Endothelial cell of umbilical vein (primary cell): ENCODE measurements at regions of chr4 and their contacts with region 1.

Region 1: DNA sequence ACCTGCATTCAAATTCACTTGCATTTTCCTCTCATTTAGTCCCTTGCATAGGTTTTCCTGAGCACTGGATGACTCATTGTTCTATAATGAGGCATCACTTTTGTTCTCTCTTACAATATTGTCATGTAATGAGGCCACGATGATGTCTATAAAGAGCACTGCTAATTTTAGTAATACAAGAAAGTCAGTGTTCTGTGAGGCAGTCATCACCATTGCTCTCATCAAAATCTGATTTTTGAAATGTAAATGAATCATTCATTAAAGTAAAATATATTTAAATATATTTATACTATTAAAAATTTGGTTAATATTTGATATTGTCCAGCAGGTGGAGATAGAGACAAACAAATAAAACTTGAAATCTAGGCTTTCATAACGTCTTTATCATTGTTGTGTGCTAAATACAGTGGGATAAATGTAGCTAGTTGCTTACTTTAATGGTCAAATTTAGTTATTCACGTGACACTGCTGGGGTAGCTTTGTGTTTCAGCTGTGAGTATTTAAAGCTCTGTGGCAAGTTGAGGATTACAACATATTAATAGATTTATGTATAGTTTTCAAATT is 15.4 kb downstream of the HMGB2 start:
- DNase-seq: peak; percentile 67
- H3K4me3 ChIP-seq: no peak overlapping the region
- H3K27ac ChIP-seq: peak overlapping the region; percentile 14
- H3K4me1 ChIP-seq: peaks cover 8% of the 10 kb centered on the region
- H3K27me3 ChIP-seq: no peaks in the 10 kb centered on the region
- CTCF ChIP-seq: peak in 1 of 2 donors; percentile 10
- POLR2A ChIP-seq: no peak

Region 2: DNA sequence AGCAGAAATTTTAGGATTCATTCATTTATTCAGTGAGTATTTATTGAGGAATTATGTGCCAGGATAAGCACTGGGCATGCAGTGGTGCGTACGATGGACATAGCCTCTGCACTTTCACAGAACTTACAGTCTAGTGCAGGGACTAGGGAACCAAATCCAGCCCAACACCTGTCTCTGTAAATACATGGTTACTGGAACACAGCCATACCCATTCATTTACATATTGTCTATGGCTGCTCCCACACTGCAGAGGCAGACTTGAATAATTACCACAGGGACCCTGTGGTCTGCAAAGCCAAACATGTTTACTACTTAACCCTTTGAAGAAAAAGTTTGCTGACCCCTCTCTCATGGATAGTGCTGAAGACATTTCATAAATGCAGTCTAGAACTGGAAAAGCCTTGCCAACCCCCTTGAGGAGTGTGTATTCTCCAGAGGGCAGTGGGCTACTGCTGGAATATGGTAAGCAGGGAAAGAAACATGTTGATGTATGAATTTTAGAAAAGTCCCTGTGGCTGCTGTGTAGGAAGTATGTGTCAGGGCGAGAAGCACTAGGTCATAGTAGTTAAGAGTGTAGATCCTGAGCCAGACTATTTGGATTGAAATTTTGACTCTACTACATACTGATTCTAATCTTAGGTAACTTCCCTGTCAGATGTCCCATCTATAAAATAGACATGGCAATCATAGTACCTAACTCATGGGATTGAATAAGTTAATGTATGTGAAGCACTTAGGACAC is 74.6 kb before region 1 on chr4:
- CTCF ChIA-PET with region 1: no interaction called
- POLR2A ChIA-PET with region 1: no interaction called
- dilution Hi-C with region 1: no loop called
- intact Hi-C with region 1: no loop called
- DNase-seq: no peak
- H3K4me3 ChIP-seq: no peak overlapping the region
- H3K27ac ChIP-seq: no peak overlapping the region
- H3K4me1 ChIP-seq: peaks cover 6% of the 10 kb centered on the region
- H3K27me3 ChIP-seq: no peaks in the 10 kb centered on the region
- CTCF ChIP-seq: no peak
- POLR2A ChIP-seq: no peak

Region 3: GRCh38 chr4:173301518-173302201 is 17.1 kb before region 1 on chr4:
- CTCF ChIA-PET with region 1: interaction called, 14 read pairs
- POLR2A ChIA-PET with region 1: no interaction called
- dilution Hi-C with region 1: no loop called
- intact Hi-C with region 1: no loop called
- DNase-seq: peak; percentile 38
- H3K4me3 ChIP-seq: no peak overlapping the region
- H3K27ac ChIP-seq: no peak overlapping the region
- H3K4me1 ChIP-seq: no peaks in the 10 kb centered on the region
- H3K27me3 ChIP-seq: no peaks in the 10 kb centered on the region
- CTCF ChIP-seq: peak; percentile 52 to 53
- POLR2A ChIP-seq: no peak

Region 4: DNA sequence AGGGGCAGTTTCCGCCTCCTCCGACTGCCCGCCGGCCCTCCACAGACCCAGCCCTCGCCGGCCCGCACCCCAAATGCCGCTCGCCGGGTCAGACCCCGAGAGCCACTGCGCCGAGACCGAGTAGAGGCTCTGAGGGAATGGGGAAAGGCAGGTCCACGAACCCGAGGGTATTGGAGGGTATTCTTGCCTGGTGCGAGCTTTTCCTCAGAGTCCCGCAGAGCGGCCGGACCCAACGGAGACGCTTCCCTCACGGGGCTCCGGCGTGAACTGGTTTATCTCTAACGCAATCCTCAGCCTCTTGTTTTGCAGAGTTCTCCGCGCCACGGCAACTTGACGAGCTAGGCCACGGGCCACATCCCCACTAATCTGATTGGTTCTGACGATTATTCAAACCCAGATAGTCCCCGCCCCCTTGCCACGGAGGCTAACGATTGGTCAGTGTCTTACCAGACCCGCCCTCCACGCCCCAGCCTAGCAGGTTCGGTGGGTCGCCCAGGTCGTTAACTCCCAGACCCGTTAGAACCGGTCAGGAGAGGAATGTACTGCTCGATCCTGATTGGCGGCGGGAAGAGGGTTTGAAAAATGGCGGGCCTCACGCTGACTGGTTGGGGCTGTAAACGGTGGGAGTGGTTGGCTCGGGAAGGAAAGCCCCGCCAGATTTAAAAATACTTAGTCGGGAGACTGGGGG is 15.5 kb after region 1 on chr4 and contains the start of gene HMGB2:
- CTCF ChIA-PET with region 1: interaction called, 47 read pairs
- POLR2A ChIA-PET with region 1: interaction called, 3 read pairs
- dilution Hi-C with region 1: no loop called
- intact Hi-C with region 1: loop called (anchors 1 kb)
- DNase-seq: peak; percentile 100
- H3K4me3 ChIP-seq: peak within 1 kb of the TSS; percentile 81 to 98 (median 91)
- H3K27ac ChIP-seq: peak within 1 kb of the TSS; percentile 88
- H3K4me1 ChIP-seq: peaks cover 24% of the 10 kb centered on the region
- H3K27me3 ChIP-seq: no peaks in the 10 kb centered on the region
- CTCF ChIP-seq: no peak
- POLR2A ChIP-seq: peak; percentile 92
- total RNA-seq, gene HMGB2: 217 and 233 TPM in 2 replicates

Region 5: GRCh38 chr4:173370477-173371291 is 52.0 kb after region 1 on chr4 and contains the start of gene SAP30:
- CTCF ChIA-PET with region 1: interaction called, 37 read pairs
- POLR2A ChIA-PET with region 1: no interaction called
- dilution Hi-C with region 1: no loop called
- intact Hi-C with region 1: loop called (anchors 1 kb)
- DNase-seq: peak; percentile 99
- H3K4me3 ChIP-seq: peak within 1 kb of the TSS; percentile 87 to 99 (median 91)
- H3K27ac ChIP-seq: peak within 1 kb of the TSS; percentile 93
- H3K4me1 ChIP-seq: peaks cover 24% of the 10 kb centered on the region
- H3K27me3 ChIP-seq: no peaks in the 10 kb centered on the region
- CTCF ChIP-seq: no peak
- POLR2A ChIP-seq: peak; percentile 95
- total RNA-seq, gene SAP30: 23.8 and 27.1 TPM in 2 replicates

Region 6: GRCh38 chr4:173478201-173478912 is 159.6 kb after region 1 on chr4:
- CTCF ChIA-PET with region 1: no interaction called
- POLR2A ChIA-PET with region 1: no interaction called
- dilution Hi-C with region 1: no loop called
- intact Hi-C with region 1: no loop called
- DNase-seq: no peak
- H3K4me3 ChIP-seq: no peak overlapping the region
- H3K27ac ChIP-seq: no peak overlapping the region
- H3K4me1 ChIP-seq: no peaks in the 10 kb centered on the region
- H3K27me3 ChIP-seq: no peaks in the 10 kb centered on the region
- CTCF ChIP-seq: no peak
- POLR2A ChIP-seq: no peak

Region 7: GRCh38 chr4:173494013-173494970 is 175.6 kb after region 1 on chr4:
- CTCF ChIA-PET with region 1: interaction called, 25 read pairs
- POLR2A ChIA-PET with region 1: no interaction called
- dilution Hi-C with region 1: no loop called
- intact Hi-C with region 1: loop called (anchors 1 kb)
- DNase-seq: peak; percentile 53
- H3K4me3 ChIP-seq: peak overlapping the region; percentile 18 to 51 (median 24)
- H3K27ac ChIP-seq: no peak overlapping the region
- H3K4me1 ChIP-seq: peaks cover 14% of the 10 kb centered on the region
- H3K27me3 ChIP-seq: peaks cover 22 to 30% of the 10 kb centered on the region in 2 experiments
- CTCF ChIP-seq: peak; percentile 58 to 77
- POLR2A ChIP-seq: no peak

Region 8: DNA sequence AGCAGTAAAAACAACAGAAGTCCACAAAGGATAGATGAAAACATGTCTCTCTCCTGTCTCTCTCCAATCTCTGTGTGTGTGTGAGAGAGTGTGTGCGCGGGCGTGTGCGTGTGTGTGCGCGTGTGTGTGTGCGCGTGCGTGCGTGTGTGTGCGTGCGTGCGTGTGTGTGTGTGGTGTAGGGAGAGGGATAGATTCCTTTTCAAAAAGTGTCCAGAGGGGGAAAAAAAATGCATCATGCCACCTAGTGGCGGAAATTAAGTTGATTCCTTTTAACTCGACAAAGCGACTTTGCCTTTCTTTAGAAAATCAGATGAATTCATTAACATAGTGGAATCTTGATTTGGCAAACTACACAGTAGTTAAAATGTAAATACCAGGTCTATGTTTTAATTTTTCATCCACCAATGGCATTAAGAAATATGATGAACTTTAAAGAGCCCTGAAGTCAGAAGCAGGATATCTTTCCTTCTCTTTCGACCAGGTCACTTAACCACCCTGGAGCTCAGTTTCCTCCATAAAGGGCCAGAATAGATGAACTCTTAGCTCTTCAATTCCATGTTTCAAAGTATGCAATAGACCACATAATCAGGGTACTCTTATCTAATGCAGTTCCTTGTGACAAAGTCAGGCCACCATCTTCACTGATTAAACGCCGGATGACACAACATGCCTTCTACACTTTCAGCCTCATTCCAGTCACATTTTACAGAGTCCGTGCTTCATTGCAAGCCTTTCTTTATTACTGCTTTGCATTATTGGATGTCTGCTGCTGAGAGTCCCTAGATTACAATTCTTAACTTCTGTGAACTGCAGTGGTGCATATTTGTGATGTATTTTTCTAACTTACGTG is 801.9 kb after region 1 on chr4:
- CTCF ChIA-PET with region 1: interaction called, 6 read pairs
- POLR2A ChIA-PET with region 1: no interaction called
- dilution Hi-C with region 1: no loop called
- intact Hi-C with region 1: loop called (anchors 1 kb)
- DNase-seq: peak; percentile 65
- H3K4me3 ChIP-seq: peak overlapping the region in 1 of 3 experiments; percentile 39
- H3K27ac ChIP-seq: no peak overlapping the region
- H3K4me1 ChIP-seq: no peaks in the 10 kb centered on the region
- H3K27me3 ChIP-seq: peaks cover 7 to 26% of the 10 kb centered on the region in 2 experiments
- CTCF ChIP-seq: peak; percentile 45 to 50
- POLR2A ChIP-seq: no peak